Endothelial cell of umbilical vein (primary cell): ENCODE measurements at regions of chr1 and their contacts with region 1.

Region 1: DNA sequence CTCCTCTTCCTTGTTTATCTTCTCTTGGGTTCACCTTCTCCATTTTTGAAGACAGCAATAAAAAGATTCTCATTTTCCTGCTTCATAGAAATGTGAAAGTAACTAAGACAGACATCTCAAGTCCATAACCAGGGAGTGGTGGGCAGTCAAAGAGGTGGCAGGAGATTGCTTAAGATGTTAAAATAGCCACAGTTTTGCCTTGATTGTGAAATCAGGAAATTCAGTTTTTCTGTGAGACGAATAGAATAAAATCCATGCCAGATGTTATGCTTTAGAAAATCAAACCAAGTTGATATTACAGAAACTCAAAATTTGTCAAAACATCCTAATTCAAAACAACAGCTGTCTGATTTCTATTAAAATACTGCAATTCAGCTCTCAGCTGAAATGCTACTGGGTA is 57.2 kb downstream of the TNN start:
- DNase-seq: no peak
- H3K4me3 ChIP-seq: no peak overlapping the region
- H3K27ac ChIP-seq: no peak overlapping the region
- H3K4me1 ChIP-seq: no peaks in the 10 kb centered on the region
- H3K27me3 ChIP-seq: peaks cover 0 to 2% of the 10 kb centered on the region in 2 experiments
- CTCF ChIP-seq: no peak
- POLR2A ChIP-seq: no peak

Region 2: DNA sequence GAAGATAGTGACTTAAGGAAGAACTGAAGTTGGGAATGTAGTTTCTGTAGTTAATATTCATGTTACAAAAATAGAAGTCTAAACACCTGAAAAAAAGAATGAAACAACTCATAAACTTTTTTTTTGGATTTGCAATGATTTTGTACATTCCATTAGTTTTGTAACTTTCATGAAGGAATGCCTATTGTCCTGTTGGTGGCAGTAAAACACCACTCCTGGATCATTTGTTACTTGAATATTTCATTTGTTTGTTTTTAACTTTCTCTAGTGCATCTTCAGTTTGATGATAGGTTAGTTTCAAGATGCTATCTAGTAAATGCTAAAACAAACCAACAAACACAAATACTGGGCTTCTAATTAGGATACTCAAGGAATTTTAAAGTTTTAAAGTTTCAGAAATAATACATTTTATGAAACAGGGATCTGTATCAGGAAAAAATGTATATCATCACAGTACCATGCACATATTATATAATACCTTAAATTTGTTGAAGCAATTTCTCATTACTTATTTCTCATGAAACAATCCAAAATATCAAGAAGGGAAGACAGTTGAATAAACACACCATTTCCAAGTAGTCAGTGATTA is 354.8 kb before region 1 on chr1:
- CTCF ChIA-PET with region 1: interaction called, 36 read pairs
- POLR2A ChIA-PET with region 1: no interaction called
- dilution Hi-C with region 1: no loop called
- intact Hi-C with region 1: loop called (anchors 1 kb)
- DNase-seq: peak; percentile 51
- H3K4me3 ChIP-seq: no peak overlapping the region
- H3K27ac ChIP-seq: no peak overlapping the region
- H3K4me1 ChIP-seq: no peaks in the 10 kb centered on the region
- H3K27me3 ChIP-seq: no peaks in the 10 kb centered on the region
- CTCF ChIP-seq: peak; percentile 48 to 50
- POLR2A ChIP-seq: no peak

Region 3: DNA sequence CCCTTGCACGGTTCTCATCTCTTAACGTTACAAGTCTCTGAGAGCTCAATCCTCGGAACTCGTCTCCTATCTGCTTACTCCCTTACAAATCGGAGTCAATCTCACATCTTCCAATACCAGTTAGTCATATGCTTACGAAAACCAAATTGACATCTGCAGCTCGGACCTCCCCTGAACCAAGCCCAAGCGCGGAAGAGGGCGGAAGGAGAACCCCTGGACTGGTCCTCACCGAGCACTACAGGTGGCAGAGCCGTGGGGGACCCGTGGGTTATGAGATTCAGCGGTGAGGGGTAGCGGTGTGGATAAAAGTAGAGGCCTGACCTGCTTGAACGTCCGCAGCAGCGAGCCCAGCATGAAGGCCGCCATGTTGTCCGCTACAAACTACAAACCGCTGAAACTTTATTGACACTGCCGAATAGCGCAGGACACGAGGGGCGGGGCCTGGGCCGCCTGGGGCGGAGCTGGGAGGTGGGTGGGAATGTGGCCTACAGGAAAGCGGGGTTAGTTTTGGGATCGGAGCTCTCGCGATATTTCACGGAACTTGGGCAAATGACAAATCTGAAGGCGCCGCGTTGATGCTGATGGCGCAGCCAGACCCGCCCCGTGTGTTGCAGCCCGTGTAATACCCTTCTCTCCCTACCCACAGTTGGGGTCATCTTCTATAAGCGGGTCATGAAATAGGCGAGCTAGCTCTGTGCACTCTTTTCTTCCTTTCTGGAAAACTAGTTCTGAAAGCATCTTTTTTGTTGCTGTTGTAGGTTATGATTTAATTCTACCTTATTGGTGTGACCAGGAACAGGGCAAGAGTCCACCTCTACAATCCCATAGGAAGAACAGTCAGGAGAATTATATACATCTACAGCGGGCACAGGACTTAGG is 101.6 kb before region 1 on chr1 and contains the start of gene MRPS14:
- CTCF ChIA-PET with region 1: interaction called, 265 read pairs
- POLR2A ChIA-PET with region 1: no interaction called
- dilution Hi-C with region 1: no loop called
- intact Hi-C with region 1: no loop called
- DNase-seq: peak; percentile 98
- H3K4me3 ChIP-seq: peak within 1 kb of the TSS; percentile 83 to 98 (median 96)
- H3K27ac ChIP-seq: peak within 1 kb of the TSS; percentile 68
- H3K4me1 ChIP-seq: peaks cover 12% of the 10 kb centered on the region
- H3K27me3 ChIP-seq: no peaks in the 10 kb centered on the region
- CTCF ChIP-seq: no peak
- POLR2A ChIP-seq: peak; percentile 77
- total RNA-seq, gene MRPS14: 31.6 and 31.8 TPM in 2 replicates

Region 4: DNA sequence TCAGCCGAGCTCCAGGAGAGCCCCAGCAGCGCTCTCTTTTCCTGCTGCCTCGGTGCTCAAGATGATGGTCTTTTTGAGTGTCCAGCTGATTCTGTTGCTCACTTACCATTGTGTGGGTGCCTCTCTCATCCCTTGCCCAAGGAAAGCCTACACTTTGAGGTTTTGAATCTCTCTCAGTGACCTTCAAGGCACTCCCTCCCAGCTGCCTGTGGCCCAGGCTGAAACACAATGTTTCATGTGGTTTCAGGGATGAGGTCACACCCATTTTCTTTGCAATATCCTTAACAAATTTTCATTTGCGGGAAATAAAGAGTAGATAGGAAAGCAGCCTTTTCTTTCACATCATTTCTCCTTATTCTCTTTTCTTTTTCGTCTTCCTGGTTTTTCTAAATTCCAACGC is 89.0 kb before region 1 on chr1:
- CTCF ChIA-PET with region 1: interaction called, 265 read pairs
- POLR2A ChIA-PET with region 1: no interaction called
- dilution Hi-C with region 1: no loop called
- intact Hi-C with region 1: no loop called
- DNase-seq: no peak
- H3K4me3 ChIP-seq: no peak overlapping the region
- H3K27ac ChIP-seq: no peak overlapping the region
- H3K4me1 ChIP-seq: no peaks in the 10 kb centered on the region
- H3K27me3 ChIP-seq: peaks cover 0 to 2% of the 10 kb centered on the region in 2 experiments
- CTCF ChIP-seq: no peak
- POLR2A ChIP-seq: no peak

Region 5: GRCh38 chr1:175062858-175063257 is 62.0 kb before region 1 on chr1:
- CTCF ChIA-PET with region 1: interaction called, 10 read pairs
- POLR2A ChIA-PET with region 1: no interaction called
- dilution Hi-C with region 1: no loop called
- intact Hi-C with region 1: no loop called
- DNase-seq: no peak
- H3K4me3 ChIP-seq: no peak overlapping the region
- H3K27ac ChIP-seq: no peak overlapping the region
- H3K4me1 ChIP-seq: no peaks in the 10 kb centered on the region
- H3K27me3 ChIP-seq: peaks cover 0 to 2% of the 10 kb centered on the region in 2 experiments
- CTCF ChIP-seq: no peak
- POLR2A ChIP-seq: no peak